PC-9 (cell line): ENCODE measurements at regions of chr2 and their contacts with region 1.

Region 1: GRCh38 chr2:112794131-112794733 is 9.9 kb upstream of the IL1A start:
- DNase-seq: peak; percentile 74 to 97
- H3K4me3 ChIP-seq: peak overlapping the region; percentile 13; the same call in 1 of the 2 replicates
- H3K27ac ChIP-seq: peak overlapping the region; percentile 99
- H3K4me1 ChIP-seq: peaks cover 51% of the 10 kb centered on the region
- H3K27me3 ChIP-seq: no peaks in the 10 kb centered on the region
- CTCF ChIP-seq: no peak

Region 2: GRCh38 chr2:112601751-112602150 is 192.5 kb before region 1 on chr2:
- CTCF ChIA-PET with region 1: interaction called, 10 read pairs
- POLR2A ChIA-PET with region 1: no interaction called
- intact Hi-C with region 1: no loop called
- DNase-seq: no peak
- H3K4me3 ChIP-seq: no peak overlapping the region
- H3K27ac ChIP-seq: no peak overlapping the region
- H3K4me1 ChIP-seq: peaks cover 23% of the 10 kb centered on the region
- H3K27me3 ChIP-seq: no peaks in the 10 kb centered on the region
- CTCF ChIP-seq: no peak

Region 3: GRCh38 chr2:112764071-112765044 is 29.9 kb before region 1 on chr2 and contains the start of gene CKAP2L:
- CTCF ChIA-PET with region 1: no interaction called
- POLR2A ChIA-PET with region 1: no interaction called
- intact Hi-C with region 1: loop called (anchors 1 kb)
- DNase-seq: peak; percentile 94
- H3K4me3 ChIP-seq: peak within 1 kb of the TSS; percentile 77
- H3K27ac ChIP-seq: 0 out of 2 replicates have a peak within 1 kb of the TSS, but pooled peaks have one; percentile 25
- H3K4me1 ChIP-seq: peaks cover 29% of the 10 kb centered on the region
- H3K27me3 ChIP-seq: no peaks in the 10 kb centered on the region
- CTCF ChIP-seq: no peak
- total RNA-seq, gene CKAP2L: 17.7 and 28.7 TPM in 2 replicates

Region 4: GRCh38 chr2:112836695-112837117 is 42.5 kb after region 1 on chr2 and contains the start of gene IL1B:
- CTCF ChIA-PET with region 1: no interaction called
- POLR2A ChIA-PET with region 1: no interaction called
- intact Hi-C with region 1: loop called (anchors 2 kb)
- DNase-seq: peak; percentile 30 to 93
- H3K4me3 ChIP-seq: peak within 1 kb of the TSS; percentile 41
- H3K27ac ChIP-seq: peak within 1 kb of the TSS; percentile 93
- H3K4me1 ChIP-seq: peaks cover 47% of the 10 kb centered on the region
- H3K27me3 ChIP-seq: no peaks in the 10 kb centered on the region
- CTCF ChIP-seq: no peak
- total RNA-seq, gene IL1B: 1.4 TPM in 2 replicates

Region 5: DNA sequence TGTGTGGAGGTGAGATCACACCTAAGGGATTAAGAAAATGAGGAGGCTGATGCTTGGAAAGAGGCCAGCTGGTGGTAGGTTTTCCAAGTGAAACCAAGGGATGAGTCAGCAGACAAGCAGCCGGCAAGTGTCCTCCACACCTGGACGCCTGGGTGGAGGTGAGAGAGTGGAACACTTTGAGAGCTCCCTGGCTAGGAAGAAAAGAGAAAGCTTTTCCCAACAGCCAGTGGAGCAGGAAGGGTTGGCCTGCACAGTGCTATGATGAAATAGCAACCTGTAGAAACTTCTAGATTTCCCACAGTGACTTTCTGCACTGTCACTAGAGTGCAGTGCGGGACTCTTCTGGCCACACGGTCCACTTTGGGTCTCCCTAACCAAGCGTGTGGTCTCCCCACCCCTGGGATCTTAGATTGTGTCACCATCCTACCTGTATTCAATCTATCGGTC is 97.2 kb after region 1 on chr2:
- CTCF ChIA-PET with region 1: no interaction called
- POLR2A ChIA-PET with region 1: no interaction called
- intact Hi-C with region 1: loop called (anchors 1 kb)
- DNase-seq: peak; percentile 88 to 95
- H3K4me3 ChIP-seq: no peak overlapping the region
- H3K27ac ChIP-seq: peak overlapping the region; percentile 95
- H3K4me1 ChIP-seq: peaks cover 17% of the 10 kb centered on the region
- H3K27me3 ChIP-seq: no peaks in the 10 kb centered on the region
- CTCF ChIP-seq: 0 out of 2 replicates have a peak, but pooled peaks have one; percentile 11